ENCODE measurements at regions of chr3 and their contacts with region 1.

Region 1: GRCh38 chr3:117355566-117355965 is 646.0 kb downstream of the TUSC7 start:
- DNase-seq: peak in 2 of 10 donors; percentile 15 to 35

Region 2: DNA sequence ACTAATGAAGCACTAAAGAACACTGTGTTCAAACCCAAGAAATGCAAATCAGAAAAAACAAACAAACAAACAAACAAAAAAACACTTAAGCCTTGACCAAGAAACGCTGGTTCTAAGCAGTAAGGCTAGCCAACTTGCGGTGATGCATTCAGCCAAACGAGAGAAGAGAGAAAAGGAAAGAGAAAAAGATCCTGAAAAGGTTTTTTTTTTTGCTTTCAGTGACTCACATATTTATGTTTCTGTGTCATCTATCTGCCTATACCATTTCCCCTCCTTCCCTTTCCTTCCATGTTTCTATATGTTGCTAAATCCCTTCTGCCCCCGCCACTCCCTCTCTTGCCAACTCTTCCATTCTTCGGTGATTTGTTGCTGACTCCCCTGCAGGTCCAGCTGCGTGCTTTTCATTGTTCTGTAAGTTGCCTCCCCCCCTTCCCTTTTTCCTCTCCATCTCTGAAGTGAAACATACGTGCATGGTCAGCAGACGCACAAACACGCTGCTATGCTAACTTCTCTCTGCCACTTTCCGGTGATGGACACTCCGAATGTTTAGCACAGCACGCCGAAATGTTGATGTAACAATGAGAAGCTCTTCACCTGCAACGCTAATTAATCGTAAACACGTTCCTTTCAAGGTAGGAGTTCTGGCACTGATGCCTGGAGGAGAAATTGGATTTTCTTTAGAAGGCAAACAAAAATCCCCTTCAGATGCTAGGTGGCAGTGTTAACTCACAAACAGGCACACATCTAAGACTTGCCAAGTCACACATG is 491.6 kb before region 1 on chr3:
- intact Hi-C with region 1: loop called (anchors 10 kb)
- DNase-seq: peak in 6 of 10 donors; percentile 7 to 71 (median 38)

Region 3: GRCh38 chr3:117019082-117019713 is 336.4 kb before region 1 on chr3:
- intact Hi-C with region 1: loop called (anchors 2 kb)
- DNase-seq: peak; percentile 42 to 95 (median 79)

Region 4: DNA sequence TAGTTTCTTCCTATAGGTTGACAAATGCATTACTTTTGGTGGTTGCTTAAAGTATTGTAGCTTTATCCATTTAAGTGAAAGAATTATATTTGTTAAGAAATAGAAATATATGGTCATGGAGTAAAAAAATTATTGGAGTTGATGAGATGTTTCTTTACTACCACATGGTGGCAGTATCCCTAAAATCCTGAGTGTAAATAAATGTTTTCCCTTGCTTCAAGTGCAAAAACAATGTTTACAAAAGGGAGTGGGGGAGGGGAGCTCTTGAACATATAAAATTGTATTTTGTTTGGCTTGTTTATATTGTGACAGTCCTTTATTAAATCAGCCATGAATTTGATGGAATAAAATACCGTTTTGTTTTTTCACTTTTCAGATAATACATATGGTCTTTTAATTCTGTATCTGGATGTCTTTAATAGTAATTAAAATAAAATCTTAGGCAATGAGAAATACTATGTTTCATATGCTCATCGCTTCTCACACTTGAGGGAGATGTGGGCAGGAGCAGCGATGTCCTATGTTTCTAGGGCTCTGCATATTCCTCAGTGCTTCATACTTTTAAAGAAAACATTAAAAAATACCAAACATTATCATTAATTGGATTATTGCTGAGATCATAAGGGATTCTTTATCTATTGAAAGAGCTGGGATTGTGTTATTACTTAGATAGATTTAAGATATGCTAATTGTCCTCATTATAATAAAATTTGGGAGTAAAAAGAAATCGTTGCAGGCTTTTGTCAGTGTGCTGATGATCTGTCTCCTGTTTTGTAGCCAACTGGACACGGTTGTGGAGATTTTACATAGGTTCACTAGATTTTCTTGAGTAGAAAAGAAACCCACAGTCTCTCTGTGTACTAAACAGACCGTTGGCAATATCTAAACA is 296.3 kb before region 1 on chr3:
- intact Hi-C with region 1: loop called (anchors 5 kb)
- DNase-seq: no peak

Region 5: DNA sequence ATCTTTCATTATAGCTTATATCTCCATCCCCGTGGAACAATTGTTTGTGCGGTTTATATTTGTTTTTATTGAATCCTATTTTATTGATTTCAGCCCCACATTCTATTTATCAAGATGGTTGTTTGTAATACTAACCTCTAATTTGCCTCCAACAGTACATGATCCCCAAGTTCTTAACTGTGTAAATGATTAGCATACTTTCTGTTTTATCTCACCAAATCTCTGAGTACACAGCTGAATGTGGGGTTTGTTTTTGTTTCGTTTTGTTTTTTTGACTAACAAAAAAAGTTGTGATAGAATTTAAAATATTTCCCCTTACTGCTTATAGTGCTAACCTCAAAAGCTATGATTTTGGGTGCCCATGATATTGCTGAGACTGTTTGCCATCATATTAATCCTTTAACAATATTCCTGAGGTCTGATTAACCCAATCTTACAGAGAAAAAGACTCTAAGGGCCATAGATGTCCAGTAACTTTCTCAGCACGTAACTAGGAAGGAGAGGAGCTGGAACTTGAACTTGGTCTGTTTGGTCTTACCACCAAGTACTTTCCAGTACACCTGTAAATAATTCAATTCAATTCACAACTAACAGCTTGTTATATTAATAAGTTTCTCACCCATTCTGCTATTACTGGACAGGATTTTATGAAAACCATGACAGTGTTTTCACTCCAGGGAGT is 143.8 kb after region 1 on chr3:
- intact Hi-C with region 1: no loop called
- DNase-seq: no peak

Region 6: GRCh38 chr3:117580806-117581205 is 225.2 kb after region 1 on chr3:
- intact Hi-C with region 1: no loop called
- DNase-seq: no peak

Region 7: DNA sequence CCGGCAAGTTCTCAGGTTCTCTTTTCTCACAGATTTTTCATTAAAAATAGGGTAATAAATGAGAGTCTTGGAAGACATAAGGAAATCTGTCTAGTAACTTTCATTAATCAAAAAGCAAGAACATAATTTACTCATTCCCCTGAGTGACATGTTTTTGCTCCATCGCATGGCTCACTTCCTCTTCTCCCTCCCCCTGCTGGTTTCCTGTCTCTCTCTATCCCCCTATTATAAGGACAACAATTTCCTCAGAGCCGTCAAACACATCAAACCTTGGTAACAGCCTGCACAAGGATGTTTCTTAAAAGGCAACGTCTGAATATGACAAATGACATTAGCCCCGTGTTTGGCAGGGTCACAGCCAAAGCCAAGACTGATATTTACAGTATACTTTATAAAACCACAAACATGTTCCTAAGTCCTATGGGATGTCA is 529.5 kb after region 1 on chr3:
- intact Hi-C with region 1: no loop called
- DNase-seq: no peak